ENCODE measurements at regions of chr4 and their contacts with region 1.

Region 1: DNA sequence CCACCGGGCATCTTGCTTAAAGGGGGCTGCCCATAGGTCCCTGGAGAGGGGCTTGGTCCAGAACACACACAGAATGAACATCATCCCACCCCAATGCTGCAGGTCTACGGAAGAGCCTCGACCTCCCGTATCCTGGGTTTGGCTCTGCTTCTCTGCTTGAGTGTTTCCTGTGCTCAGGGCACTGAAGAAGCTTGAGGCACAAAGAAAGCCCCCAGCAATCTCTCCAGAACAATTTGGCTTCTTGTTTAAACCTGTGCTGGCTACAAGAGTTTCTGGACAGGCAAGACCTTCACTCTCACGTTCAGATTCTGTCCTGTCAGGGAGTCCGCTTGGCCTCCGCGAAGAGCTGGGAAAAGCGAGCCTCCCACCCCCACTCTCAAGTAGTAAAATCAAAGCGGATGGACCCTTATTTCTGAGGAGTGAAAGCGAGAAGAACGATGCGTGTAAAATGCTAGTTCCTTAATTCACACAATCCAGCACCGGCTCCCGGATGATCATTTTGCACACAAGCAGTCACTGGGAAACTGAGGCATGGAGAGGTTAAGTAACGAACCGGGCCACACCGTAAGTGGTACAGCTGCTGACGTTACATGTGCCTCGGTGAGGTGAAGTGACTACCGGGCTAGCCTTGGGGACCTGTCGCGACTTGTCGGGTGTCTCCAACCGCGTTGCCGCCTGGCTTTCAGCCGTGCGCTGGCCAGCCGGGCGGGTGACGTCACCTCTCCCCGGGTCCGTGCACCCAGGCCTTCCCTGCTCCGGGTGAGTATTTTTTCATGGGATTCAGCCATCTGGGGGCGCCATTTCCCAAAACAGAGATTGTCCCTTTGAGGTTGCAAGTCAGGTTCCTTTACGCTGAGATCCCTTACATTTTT is 3.1 kb upstream of the SFRP2 start:
- DNase-seq: no peak
- H3K4me3 Mint-ChIP-seq: peak overlapping the region; percentile 64
- H3K27ac Mint-ChIP-seq: peak overlapping the region; percentile 61
- H3K4me1 Mint-ChIP-seq: peaks cover 20% of the 10 kb centered on the region
- H3K27me3 Mint-ChIP-seq: peaks cover 87% of the 10 kb centered on the region

Region 2: GRCh38 chr4:154024097-154024694 is 232.2 kb after region 1 on chr4:
- intact Hi-C with region 1: loop called (anchors 10 kb)
- DNase-seq: no peak
- H3K4me3 Mint-ChIP-seq: no peak overlapping the region
- H3K27ac Mint-ChIP-seq: no peak overlapping the region
- H3K4me1 Mint-ChIP-seq: no peaks in the 10 kb centered on the region
- H3K27me3 Mint-ChIP-seq: peaks cover 3% of the 10 kb centered on the region

Region 3: DNA sequence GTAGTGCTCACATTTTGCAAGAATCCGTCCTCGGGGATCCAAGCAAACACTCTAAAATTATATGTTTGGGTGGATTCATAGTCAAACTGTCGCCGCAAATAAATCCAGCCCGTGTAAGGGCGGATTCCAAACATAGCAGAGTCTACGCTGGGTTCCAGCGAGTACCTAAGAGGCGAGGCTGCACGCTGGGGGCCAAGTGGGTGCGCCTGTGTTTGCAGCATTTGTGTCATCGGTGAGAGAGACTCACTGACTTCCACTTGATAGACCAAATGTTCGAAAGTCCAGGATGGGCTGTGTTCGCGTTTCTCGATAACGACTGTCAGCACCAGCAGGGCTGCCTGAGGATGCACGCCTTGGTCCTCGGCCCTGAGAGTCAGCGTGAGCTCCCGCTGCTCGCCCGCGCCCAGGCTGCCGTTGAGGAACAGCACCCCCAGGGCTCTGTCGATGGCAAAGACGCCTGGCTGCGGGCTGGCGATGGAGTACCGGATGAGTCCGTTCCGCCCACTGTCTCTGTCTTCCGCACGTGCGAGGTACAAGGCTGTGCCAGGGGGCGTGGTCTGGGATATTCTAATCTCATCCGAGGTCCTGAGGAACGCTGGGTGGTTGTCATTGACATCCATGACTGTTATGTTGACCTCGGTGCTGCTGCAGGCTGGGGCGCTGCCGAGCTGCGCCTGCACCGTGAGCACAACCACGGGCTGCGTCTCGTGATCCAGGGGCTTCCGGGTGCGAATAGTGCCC is 540.9 kb after region 1 on chr4:
- intact Hi-C with region 1: loop called (anchors 10 kb)
- DNase-seq: peak; percentile 27
- H3K4me3 Mint-ChIP-seq: peak overlapping the region; percentile 78
- H3K27ac Mint-ChIP-seq: no peak overlapping the region
- H3K4me1 Mint-ChIP-seq: peaks cover 10% of the 10 kb centered on the region
- H3K27me3 Mint-ChIP-seq: peaks cover 47% of the 10 kb centered on the region

Region 4: GRCh38 chr4:154491341-154492271 is 699.6 kb after region 1 on chr4 and contains the start of gene DCHS2:
- intact Hi-C with region 1: loop called (anchors 5 kb)
- DNase-seq: no peak
- H3K4me3 Mint-ChIP-seq: peak within 1 kb of the TSS; percentile 67
- H3K27ac Mint-ChIP-seq: peak within 1 kb of the TSS; percentile 58
- H3K4me1 Mint-ChIP-seq: peaks cover 15% of the 10 kb centered on the region
- H3K27me3 Mint-ChIP-seq: peaks cover 73% of the 10 kb centered on the region
- total RNA-seq, gene DCHS2: not detected in 2 replicates

Region 5: DNA sequence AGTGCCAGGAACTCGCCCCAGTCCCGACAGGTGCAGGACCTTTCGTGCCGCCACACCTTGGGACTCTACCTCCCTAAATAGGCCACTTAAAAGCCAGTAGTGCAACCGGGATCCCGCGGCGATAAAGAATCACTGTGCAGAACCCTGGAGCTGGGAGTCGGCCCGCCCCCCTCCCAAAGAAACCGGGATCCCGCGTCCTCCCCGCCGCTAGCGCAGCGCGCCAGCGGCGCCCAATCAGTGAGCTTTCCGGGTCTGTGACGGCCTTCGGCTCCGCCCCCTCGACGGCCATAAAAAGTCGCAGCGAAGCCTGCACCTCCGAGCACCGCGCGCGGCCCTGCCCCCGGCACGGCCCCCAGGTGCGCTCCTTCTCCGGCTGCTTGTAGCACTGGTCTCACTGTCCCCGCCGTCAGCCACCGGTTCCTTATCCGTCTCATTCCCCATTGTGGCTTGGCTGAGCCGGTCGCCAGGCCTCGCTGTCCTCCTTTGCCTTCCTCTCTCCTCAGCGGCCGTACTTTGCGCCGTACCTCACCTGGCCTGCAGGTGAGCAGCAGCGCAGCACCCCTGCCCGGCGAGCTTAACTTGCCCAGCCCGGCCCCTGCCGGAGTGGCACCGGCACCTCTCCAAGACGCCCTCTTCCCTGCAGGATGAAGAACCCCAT is 951.8 kb after region 1 on chr4 and contains the start of gene LRAT:
- intact Hi-C with region 1: loop called (anchors 5 kb)
- DNase-seq: peak; percentile 45
- H3K4me3 Mint-ChIP-seq: peak within 1 kb of the TSS; percentile 85
- H3K27ac Mint-ChIP-seq: no peak within 1 kb of the TSS
- H3K4me1 Mint-ChIP-seq: peaks cover 12% of the 10 kb centered on the region
- H3K27me3 Mint-ChIP-seq: peaks cover 63% of the 10 kb centered on the region
- total RNA-seq, gene LRAT: not detected in 2 replicates